Caco-2 (cell line): ENCODE measurements at regions of chr12 and their contacts with region 1.

Region 1: GRCh38 chr12:74043324-74043723 is 494.3 kb upstream of the ATXN7L3B start:
- DNase-seq: peak in 1 of 2 experiments; percentile 72
- H3K4me3 ChIP-seq: no peak overlapping the region
- H3K4me3 Mint-ChIP-seq: peak overlapping the region; percentile 42
- H3K27ac Mint-ChIP-seq: peak overlapping the region; percentile 58
- H3K4me1 ChIP-seq: peaks cover 20% of the 10 kb centered on the region
- H3K4me1 Mint-ChIP-seq: peaks cover 33% of the 10 kb centered on the region
- H3K27me3 ChIP-seq: no peaks in the 10 kb centered on the region
- H3K27me3 Mint-ChIP-seq: no peaks in the 10 kb centered on the region
- CTCF ChIP-seq: no peak

Region 2: DNA sequence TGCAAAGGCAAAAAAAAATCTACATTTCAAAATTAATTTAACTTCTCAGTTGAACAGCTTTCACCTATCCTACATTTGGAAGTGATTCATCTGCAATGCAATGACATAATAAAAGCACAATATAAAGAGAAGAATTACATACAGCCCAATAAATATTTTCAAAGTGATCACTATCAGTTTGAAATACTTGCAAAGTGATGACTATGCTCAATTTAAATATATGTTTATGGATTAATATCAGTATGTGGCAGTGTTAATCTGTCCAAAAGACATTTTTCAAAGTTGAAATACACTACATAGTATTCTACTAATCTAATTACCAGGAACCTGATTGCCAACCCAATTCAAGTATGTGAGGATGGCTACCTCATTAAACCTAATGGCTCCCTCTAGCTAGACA is 33.6 kb after region 1 on chr12:
- CTCF ChIA-PET with region 1: no interaction called
- POLR2A ChIA-PET with region 1: no interaction called
- intact Hi-C with region 1: no loop called
- DNase-seq: no peak
- H3K4me3 ChIP-seq: no peak overlapping the region
- H3K4me3 Mint-ChIP-seq: no peak overlapping the region
- H3K27ac Mint-ChIP-seq: no peak overlapping the region
- H3K4me1 ChIP-seq: no peaks in the 10 kb centered on the region
- H3K4me1 Mint-ChIP-seq: no peaks in the 10 kb centered on the region
- H3K27me3 ChIP-seq: no peaks in the 10 kb centered on the region
- H3K27me3 Mint-ChIP-seq: no peaks in the 10 kb centered on the region
- CTCF ChIP-seq: no peak

Region 3: GRCh38 chr12:74170645-74171477 is 127.5 kb after region 1 on chr12:
- CTCF ChIA-PET with region 1: no interaction called
- POLR2A ChIA-PET with region 1: no interaction called
- intact Hi-C with region 1: loop called (anchors 10 kb)
- DNase-seq: no peak
- H3K4me3 ChIP-seq: no peak overlapping the region
- H3K4me3 Mint-ChIP-seq: no peak overlapping the region
- H3K27ac Mint-ChIP-seq: no peak overlapping the region
- H3K4me1 ChIP-seq: peaks cover 13% of the 10 kb centered on the region
- H3K4me1 Mint-ChIP-seq: peaks cover 7% of the 10 kb centered on the region
- H3K27me3 ChIP-seq: no peaks in the 10 kb centered on the region
- H3K27me3 Mint-ChIP-seq: no peaks in the 10 kb centered on the region
- CTCF ChIP-seq: no peak

Region 4: GRCh38 chr12:74245458-74245857 is 202.1 kb after region 1 on chr12:
- CTCF ChIA-PET with region 1: no interaction called
- POLR2A ChIA-PET with region 1: no interaction called
- intact Hi-C with region 1: no loop called
- DNase-seq: no peak
- H3K4me3 ChIP-seq: no peak overlapping the region
- H3K4me3 Mint-ChIP-seq: no peak overlapping the region
- H3K27ac Mint-ChIP-seq: no peak overlapping the region
- H3K4me1 ChIP-seq: no peaks in the 10 kb centered on the region
- H3K4me1 Mint-ChIP-seq: no peaks in the 10 kb centered on the region
- H3K27me3 ChIP-seq: no peaks in the 10 kb centered on the region
- H3K27me3 Mint-ChIP-seq: no peaks in the 10 kb centered on the region
- CTCF ChIP-seq: no peak

Region 5: GRCh38 chr12:74328616-74329015 is 285.3 kb after region 1 on chr12:
- CTCF ChIA-PET with region 1: no interaction called
- POLR2A ChIA-PET with region 1: no interaction called
- intact Hi-C with region 1: loop called (anchors 5 kb)
- DNase-seq: peak; percentile 46
- H3K4me3 ChIP-seq: no peak overlapping the region
- H3K4me3 Mint-ChIP-seq: no peak overlapping the region
- H3K27ac Mint-ChIP-seq: no peak overlapping the region
- H3K4me1 ChIP-seq: peaks cover 13% of the 10 kb centered on the region; the same call in 1 of the 2 replicates
- H3K4me1 Mint-ChIP-seq: peaks cover 6% of the 10 kb centered on the region
- H3K27me3 ChIP-seq: no peaks in the 10 kb centered on the region
- H3K27me3 Mint-ChIP-seq: no peaks in the 10 kb centered on the region
- CTCF ChIP-seq: no peak